Right ventricle myocardium inferior (tissue), 1 donor: ENCODE measurements at regions of chr2 and their contacts with region 1.

Region 1: GRCh38 chr2:176079831-176080539 is 3.8 kb downstream of the EVX2 start:
- DNase-seq: peak; percentile 73
- ATAC-seq: peak; percentile 37

Region 2: GRCh38 chr2:175929850-175930249 is 150.1 kb before region 1 on chr2:
- intact Hi-C with region 1: loop called (anchors 5 kb)
- DNase-seq: no peak
- ATAC-seq: no peak